ENCODE measurements at regions of chr4 and their contacts with region 1.

Region 1: DNA sequence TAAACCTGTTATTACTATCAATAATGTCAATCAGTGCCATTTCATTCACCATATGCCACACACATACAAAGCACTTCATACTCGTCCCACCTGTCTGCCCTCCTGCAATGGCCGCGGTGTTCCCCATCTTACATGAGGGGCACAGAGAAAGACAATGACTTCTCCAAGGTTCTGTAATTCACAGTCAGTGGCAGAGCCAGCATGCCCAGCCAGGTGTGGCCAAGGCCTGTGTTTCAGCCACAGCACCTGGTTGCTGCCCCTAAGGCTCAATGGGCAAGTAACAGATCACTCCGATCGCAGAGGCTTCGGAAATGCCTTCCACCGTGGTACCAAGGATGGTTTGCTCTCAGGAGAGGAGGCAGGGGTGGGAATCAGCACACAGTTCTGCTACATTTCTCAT is 10.9 kb downstream of the AFAP1 start:
- DNase-seq: no peak
- H3K4me3 Mint-ChIP-seq: no peak overlapping the region
- H3K27ac Mint-ChIP-seq: no peak overlapping the region
- H3K4me1 Mint-ChIP-seq: no peaks in the 10 kb centered on the region
- H3K27me3 Mint-ChIP-seq: no peaks in the 10 kb centered on the region

Region 2: DNA sequence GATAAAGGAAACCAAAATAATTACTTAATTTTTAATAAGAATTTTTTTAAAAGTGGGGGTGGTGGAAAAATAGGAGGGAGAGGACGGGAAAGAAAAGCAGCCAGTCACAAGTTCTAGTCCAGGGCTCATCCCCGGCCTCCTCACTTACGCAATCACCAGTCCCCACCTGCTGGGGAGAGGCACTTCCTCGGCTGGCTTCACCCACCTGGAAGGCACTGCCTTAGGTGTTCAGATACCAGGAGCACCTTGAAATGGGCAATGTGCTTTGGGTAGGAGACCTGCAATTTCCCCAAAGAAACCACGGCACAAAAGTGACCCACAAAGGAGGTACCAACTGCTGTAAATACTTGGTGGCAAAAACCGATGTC is 12.9 kb before region 1 on chr4:
- CTCF ChIA-PET with region 1: interaction called, 10 read pairs
- POLR2A ChIA-PET with region 1: no interaction called
- DNase-seq: no peak
- H3K4me3 Mint-ChIP-seq: no peak overlapping the region
- H3K27ac Mint-ChIP-seq: no peak overlapping the region
- H3K4me1 Mint-ChIP-seq: peaks cover 10% of the 10 kb centered on the region
- H3K27me3 Mint-ChIP-seq: no peaks in the 10 kb centered on the region

Region 3: GRCh38 chr4:7939377-7940108 is 10.8 kb after region 1 on chr4 and contains the start of gene AFAP1:
- CTCF ChIA-PET with region 1: interaction called, 20 read pairs
- POLR2A ChIA-PET with region 1: no interaction called
- DNase-seq: peak; percentile 87
- H3K4me3 Mint-ChIP-seq: peak within 1 kb of the TSS; percentile 63
- H3K27ac Mint-ChIP-seq: peak within 1 kb of the TSS; percentile 25
- H3K4me1 Mint-ChIP-seq: peaks cover 21% of the 10 kb centered on the region
- H3K27me3 Mint-ChIP-seq: peaks cover 24% of the 10 kb centered on the region
- total RNA-seq, gene AFAP1: 7.1 to 7.9 TPM

Region 4: GRCh38 chr4:7987148-7987989 is 58.7 kb after region 1 on chr4:
- CTCF ChIA-PET with region 1: no interaction called
- POLR2A ChIA-PET with region 1: no interaction called
- DNase-seq: peak; percentile 82
- H3K4me3 Mint-ChIP-seq: no peak overlapping the region
- H3K27ac Mint-ChIP-seq: no peak overlapping the region
- H3K4me1 Mint-ChIP-seq: peaks cover 7% of the 10 kb centered on the region
- H3K27me3 Mint-ChIP-seq: no peaks in the 10 kb centered on the region